Calu3 (cell line): ENCODE measurements at regions of chr17 and their contacts with region 1.

Region 1: DNA sequence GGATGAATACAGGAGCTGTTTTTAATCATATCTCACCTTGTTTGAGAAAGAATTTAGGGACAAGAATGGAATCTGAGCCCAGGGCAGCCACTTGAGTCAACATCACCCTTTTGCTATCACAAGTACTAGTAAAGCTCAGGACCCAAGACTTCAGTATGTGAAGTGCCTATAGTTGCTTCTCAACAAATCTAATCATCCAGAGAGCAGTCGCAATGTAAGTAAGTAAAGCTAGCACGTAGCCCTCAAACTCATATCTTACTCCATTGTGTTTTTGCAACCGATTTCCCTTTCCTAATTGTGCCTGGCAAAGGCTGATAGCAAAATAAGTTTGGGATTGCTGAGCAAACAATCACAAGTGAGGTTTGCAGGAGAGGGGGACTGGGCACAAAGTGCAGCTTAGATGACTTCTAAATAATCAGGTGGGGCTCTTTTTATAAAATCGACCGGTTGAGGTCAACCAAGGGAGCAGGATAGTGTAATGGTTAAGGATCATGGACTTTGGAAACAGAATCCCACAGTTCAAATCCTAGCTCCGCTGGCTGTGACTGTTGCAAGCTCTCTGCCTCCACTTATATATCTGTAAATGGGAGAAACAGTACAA is 13.0 kb downstream of the TOB1 start:
- DNase-seq: no peak
- H3K4me3 Mint-ChIP-seq: peak overlapping the region; percentile 14
- H3K27ac Mint-ChIP-seq: peak overlapping the region; percentile 20
- H3K4me1 Mint-ChIP-seq: peaks cover 19% of the 10 kb centered on the region
- H3K27me3 Mint-ChIP-seq: no peaks in the 10 kb centered on the region
- CTCF ChIP-seq: no peak

Region 2: GRCh38 chr17:50151041-50151936 is 701.8 kb before region 1 on chr17:
- CTCF ChIA-PET with region 1: no interaction called
- intact Hi-C with region 1: no loop called
- DNase-seq: peak; percentile 96
- H3K4me3 Mint-ChIP-seq: peak overlapping the region; percentile 83
- H3K27ac Mint-ChIP-seq: peak overlapping the region; percentile 58
- H3K4me1 Mint-ChIP-seq: peaks cover 61% of the 10 kb centered on the region
- H3K27me3 Mint-ChIP-seq: no peaks in the 10 kb centered on the region
- CTCF ChIP-seq: peak; percentile 75

Region 3: GRCh38 chr17:50731575-50732460 is 121.3 kb before region 1 on chr17:
- CTCF ChIA-PET with region 1: no interaction called
- intact Hi-C with region 1: no loop called
- DNase-seq: no peak
- H3K4me3 Mint-ChIP-seq: no peak overlapping the region
- H3K27ac Mint-ChIP-seq: peak overlapping the region; percentile 45
- H3K4me1 Mint-ChIP-seq: peaks cover 45% of the 10 kb centered on the region
- H3K27me3 Mint-ChIP-seq: no peaks in the 10 kb centered on the region
- CTCF ChIP-seq: no peak

Region 4: DNA sequence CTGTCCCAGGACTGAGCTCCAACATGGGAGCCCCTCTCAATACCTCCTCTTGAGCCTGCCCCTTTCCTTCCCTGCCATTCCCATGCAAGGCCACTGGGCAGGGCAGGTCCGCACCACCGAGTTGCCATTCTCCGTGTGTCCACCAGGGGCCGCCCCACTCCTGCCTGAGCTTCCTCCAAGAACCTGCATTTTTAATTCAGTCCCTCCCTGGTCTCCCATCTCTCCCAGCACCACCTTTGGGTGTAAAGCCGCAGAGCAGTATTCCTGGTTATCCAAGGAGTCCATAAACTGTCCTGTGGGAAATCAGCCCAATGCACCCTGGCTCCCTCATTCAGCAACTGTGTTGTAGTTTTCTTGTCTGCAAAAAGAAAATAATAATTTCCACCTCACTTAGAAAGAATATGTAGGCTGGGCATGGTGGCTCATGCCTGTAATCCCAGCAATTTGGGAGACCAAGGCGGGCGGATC is 69.9 kb before region 1 on chr17:
- CTCF ChIA-PET with region 1: interaction called, 18 read pairs
- intact Hi-C with region 1: no loop called
- DNase-seq: peak; percentile 98
- H3K4me3 Mint-ChIP-seq: no peak overlapping the region
- H3K27ac Mint-ChIP-seq: no peak overlapping the region
- H3K4me1 Mint-ChIP-seq: no peaks in the 10 kb centered on the region
- H3K27me3 Mint-ChIP-seq: peaks cover 8% of the 10 kb centered on the region
- CTCF ChIP-seq: peak; percentile 100

Region 5: GRCh38 chr17:50949989-50950881 is 97.1 kb after region 1 on chr17:
- CTCF ChIA-PET with region 1: interaction called, 57 read pairs
- intact Hi-C with region 1: loop called (anchors 1 kb)
- DNase-seq: peak; percentile 89
- H3K4me3 Mint-ChIP-seq: peak overlapping the region; percentile 26
- H3K27ac Mint-ChIP-seq: peak overlapping the region; percentile 19
- H3K4me1 Mint-ChIP-seq: peaks cover 58% of the 10 kb centered on the region
- H3K27me3 Mint-ChIP-seq: no peaks in the 10 kb centered on the region
- CTCF ChIP-seq: peak; percentile 94

Region 6: DNA sequence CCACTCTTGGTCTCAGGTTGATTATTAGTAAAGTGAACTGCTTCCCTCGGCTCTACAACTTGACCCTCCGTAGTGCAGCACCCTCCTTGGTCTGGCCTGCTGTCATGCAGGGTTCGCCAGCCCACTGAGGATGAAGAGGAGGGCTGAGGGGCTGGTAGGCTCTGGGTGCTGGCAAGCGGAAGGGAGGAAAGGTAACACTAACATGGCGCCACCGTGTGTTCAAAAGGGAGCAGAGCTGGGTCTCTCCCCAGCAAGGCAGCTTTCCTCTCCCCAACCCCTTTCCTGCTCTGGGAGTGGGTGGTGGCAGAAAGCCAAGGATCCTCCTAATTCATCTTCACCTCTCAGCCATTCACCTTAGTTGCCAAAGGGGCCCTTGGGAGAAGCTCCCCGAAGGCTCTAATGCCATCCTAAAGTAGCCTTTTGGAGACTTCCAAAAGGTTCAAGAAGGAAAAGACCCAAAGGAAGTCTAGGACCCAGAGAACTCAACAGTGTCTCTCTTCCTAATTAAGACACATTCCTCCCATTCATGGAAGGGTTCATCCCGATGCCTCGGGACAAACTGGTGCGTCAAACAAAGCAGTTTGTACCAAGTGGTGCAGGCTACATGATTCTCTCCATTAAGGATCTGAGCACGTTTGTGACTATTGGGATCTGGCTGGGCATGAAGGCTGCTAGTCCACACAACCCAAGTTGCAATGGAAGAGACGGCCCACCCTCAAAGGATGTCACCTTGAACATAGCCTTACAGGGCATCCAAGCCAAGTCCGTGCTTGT is 103.8 kb after region 1 on chr17:
- CTCF ChIA-PET with region 1: interaction called, 57 read pairs
- intact Hi-C with region 1: loop called (anchors 1 kb)
- DNase-seq: peak; percentile 80
- H3K4me3 Mint-ChIP-seq: no peak overlapping the region
- H3K27ac Mint-ChIP-seq: no peak overlapping the region
- H3K4me1 Mint-ChIP-seq: peaks cover 4% of the 10 kb centered on the region
- H3K27me3 Mint-ChIP-seq: no peaks in the 10 kb centered on the region
- CTCF ChIP-seq: peak; percentile 94